ENCODE measurements at regions of chr19 and their contacts with region 1.

Region 1: GRCh38 chr19:3762501-3763459 is at the start of gene MRPL54:
- DNase-seq: peak; percentile 100
- H3K4me3 Mint-ChIP-seq: peak within 1 kb of the TSS; percentile 100
- H3K27ac Mint-ChIP-seq: peak within 1 kb of the TSS; percentile 99
- H3K4me1 Mint-ChIP-seq: peaks cover 27% of the 10 kb centered on the region
- H3K27me3 Mint-ChIP-seq: peaks cover 2% of the 10 kb centered on the region
- total RNA-seq, gene MRPL54: 88.2 and 94.7 TPM in 2 replicates

Region 2: DNA sequence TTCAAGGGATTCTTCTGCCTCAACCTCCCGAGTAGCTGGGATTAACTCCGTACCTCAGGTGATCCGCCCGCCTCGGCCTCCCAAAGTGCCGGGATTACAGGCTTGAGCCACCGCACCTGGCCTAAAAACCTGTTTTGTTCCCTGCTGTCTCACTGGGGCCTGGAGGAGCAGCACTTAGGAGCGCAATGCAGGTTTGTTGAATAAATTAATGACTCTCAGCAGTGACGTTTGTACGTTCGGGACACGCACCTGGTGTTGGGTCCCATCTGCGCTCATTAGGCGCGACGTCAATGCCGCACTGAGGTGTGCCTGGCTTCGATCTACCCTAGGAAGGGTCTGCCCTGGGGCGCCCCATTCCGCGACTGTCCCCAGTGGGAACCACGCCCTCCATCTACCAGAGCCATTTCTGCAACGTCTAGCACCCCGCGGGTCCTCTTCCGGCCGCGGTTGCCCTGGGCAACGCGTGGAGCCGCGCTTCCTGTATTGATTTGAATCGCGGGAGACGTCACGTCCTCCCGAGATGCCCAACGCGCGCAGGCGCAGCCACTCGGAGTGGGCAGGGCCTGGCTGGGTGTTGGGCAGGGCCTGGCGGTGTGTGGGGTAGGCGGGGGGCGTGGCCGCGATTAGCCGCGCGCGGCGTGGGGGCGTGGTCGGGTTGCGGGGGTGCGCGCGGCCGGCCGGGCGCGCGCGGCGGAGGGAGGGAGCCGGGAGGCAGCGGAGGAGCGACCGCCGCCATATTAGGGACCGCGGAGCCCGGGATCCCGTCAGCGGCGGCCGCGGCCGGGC is 257.0 kb before region 1 on chr19 and contains the start of gene FZR1:
- intact Hi-C with region 1: loop called (anchors 1 kb)
- DNase-seq: peak; percentile 100
- H3K4me3 Mint-ChIP-seq: peak within 1 kb of the TSS; percentile 93
- H3K27ac Mint-ChIP-seq: peak within 1 kb of the TSS; percentile 97
- H3K4me1 Mint-ChIP-seq: peaks cover 43% of the 10 kb centered on the region
- H3K27me3 Mint-ChIP-seq: no peaks in the 10 kb centered on the region
- total RNA-seq, gene FZR1: 41.1 and 45.3 TPM in 2 replicates

Region 3: DNA sequence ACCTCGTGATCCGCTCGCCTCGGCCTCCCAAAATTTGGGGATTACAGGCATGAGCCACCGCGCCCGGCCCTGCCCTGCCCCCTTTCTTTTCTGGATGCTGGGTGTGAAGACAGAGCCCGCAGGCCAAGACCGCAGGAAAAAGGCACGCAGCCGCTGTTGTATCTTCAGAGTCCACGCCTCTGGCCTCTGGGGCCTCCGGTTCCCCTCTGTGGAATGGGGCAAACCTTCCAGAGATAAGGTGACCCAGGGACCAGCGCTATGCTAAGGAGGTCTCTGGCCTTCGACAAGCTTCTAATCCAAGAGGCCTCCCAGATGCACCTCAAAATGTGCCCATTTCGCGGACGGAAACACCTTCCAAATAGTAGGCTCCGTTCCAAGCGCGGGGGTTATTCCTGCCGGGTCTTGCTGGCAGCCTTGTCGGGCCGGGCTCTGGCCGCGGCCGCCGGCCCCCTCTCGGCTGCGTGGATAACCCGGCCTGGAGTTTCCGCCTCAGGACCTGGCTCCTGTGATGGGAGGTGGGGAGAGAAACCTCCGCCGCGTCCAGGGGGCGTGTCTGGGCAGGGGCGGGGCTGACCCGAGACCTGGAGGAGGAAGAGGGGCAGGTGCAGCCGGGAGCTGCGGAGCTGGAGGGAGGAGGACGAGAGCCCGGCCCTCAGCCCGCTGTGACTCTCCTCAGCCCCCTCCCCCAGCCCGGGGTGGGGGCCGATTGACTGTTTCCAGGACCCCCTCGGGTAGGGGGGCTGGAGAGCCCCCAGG is 41.5 kb before region 1 on chr19:
- intact Hi-C with region 1: loop called (anchors 1 kb)
- DNase-seq: peak; percentile 81
- H3K4me3 Mint-ChIP-seq: no peak overlapping the region
- H3K27ac Mint-ChIP-seq: no peak overlapping the region
- H3K4me1 Mint-ChIP-seq: no peaks in the 10 kb centered on the region
- H3K27me3 Mint-ChIP-seq: peaks cover 40% of the 10 kb centered on the region

Region 4: GRCh38 chr19:3821857-3822364 is 59.1 kb after region 1 on chr19:
- intact Hi-C with region 1: loop called (anchors 1 kb)
- DNase-seq: peak; percentile 83
- H3K4me3 Mint-ChIP-seq: peak overlapping the region; percentile 19
- H3K27ac Mint-ChIP-seq: no peak overlapping the region
- H3K4me1 Mint-ChIP-seq: peaks cover 12% of the 10 kb centered on the region
- H3K27me3 Mint-ChIP-seq: no peaks in the 10 kb centered on the region

Region 5: DNA sequence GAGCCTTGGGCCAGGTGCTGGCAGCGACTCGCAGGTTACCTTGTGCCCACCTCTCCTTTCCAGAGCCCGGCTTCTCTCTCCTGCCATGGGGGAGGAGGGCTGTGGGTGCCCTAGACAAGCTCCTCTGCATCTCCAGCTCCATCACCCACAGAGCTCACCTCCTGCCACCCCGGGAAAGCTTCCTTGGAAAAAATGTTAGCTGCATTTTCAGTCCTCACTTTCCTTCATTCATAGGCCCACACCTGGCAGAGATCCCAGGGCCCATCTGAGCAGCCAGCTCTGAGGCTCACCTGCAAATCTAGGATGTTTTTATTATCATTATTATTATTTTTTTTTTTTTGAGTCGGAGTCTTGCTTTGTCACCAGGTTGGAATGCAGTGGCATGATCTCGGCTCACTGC is 69.2 kb after region 1 on chr19:
- intact Hi-C with region 1: no loop called
- DNase-seq: no peak
- H3K4me3 Mint-ChIP-seq: no peak overlapping the region
- H3K27ac Mint-ChIP-seq: no peak overlapping the region
- H3K4me1 Mint-ChIP-seq: no peaks in the 10 kb centered on the region
- H3K27me3 Mint-ChIP-seq: no peaks in the 10 kb centered on the region

Region 6: GRCh38 chr19:3893509-3894179 is 130.9 kb after region 1 on chr19:
- intact Hi-C with region 1: no loop called
- DNase-seq: no peak
- H3K4me3 Mint-ChIP-seq: no peak overlapping the region
- H3K27ac Mint-ChIP-seq: no peak overlapping the region
- H3K4me1 Mint-ChIP-seq: no peaks in the 10 kb centered on the region
- H3K27me3 Mint-ChIP-seq: no peaks in the 10 kb centered on the region

Region 7: GRCh38 chr19:4065430-4066175 is 302.8 kb after region 1 on chr19:
- intact Hi-C with region 1: loop called (anchors 1 kb)
- DNase-seq: peak; percentile 97
- H3K4me3 Mint-ChIP-seq: peak overlapping the region; percentile 64
- H3K27ac Mint-ChIP-seq: no peak overlapping the region
- H3K4me1 Mint-ChIP-seq: peaks cover 16% of the 10 kb centered on the region
- H3K27me3 Mint-ChIP-seq: no peaks in the 10 kb centered on the region

Region 8: DNA sequence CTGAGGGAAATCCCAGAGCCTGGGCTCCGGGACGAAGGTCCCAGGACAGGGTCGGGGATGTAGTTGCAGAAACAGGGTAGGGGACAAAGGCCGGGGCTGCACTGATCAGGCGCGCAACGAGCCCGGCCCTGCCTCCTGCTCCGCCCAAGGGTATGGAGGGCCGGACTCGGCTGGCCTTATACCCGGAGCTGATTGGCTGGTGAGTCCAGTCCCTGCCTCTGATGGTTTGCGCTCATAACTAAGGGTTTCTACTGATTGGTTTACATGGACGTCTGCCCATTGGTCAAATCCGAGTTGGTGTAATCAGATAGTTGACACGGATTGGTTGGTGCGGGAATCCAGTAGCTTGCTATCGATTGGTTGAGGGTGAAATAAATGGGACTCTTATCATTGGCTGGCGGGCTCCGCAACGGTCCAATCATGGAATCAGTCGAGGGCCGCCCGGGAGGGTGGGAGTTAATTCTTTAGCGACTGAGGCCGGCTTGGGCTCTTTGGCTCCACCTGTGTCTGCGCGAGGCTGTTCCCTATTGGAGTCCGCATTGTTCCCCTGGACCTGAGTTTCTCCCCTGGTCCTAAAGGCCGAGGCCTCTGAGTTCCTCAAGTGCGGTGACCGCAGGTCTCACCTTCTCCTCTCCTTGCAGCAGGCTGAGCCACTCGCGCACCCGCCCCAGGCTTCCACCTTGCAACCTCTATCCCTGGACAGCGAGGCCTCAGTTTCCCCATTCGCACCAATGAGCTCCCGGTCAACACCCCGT is 580.0 kb after region 1 on chr19:
- intact Hi-C with region 1: loop called (anchors 2 kb)
- DNase-seq: peak; percentile 92
- H3K4me3 Mint-ChIP-seq: peak overlapping the region; percentile 91
- H3K27ac Mint-ChIP-seq: peak overlapping the region; percentile 90
- H3K4me1 Mint-ChIP-seq: peaks cover 18% of the 10 kb centered on the region
- H3K27me3 Mint-ChIP-seq: no peaks in the 10 kb centered on the region